Activated CD8-positive, alpha-beta T cell treated with anti-CD3 and anti-CD28 coated beads for 36 hours (primary cell): ENCODE measurements at regions of chr12 and their contacts with region 1.

Region 1: DNA sequence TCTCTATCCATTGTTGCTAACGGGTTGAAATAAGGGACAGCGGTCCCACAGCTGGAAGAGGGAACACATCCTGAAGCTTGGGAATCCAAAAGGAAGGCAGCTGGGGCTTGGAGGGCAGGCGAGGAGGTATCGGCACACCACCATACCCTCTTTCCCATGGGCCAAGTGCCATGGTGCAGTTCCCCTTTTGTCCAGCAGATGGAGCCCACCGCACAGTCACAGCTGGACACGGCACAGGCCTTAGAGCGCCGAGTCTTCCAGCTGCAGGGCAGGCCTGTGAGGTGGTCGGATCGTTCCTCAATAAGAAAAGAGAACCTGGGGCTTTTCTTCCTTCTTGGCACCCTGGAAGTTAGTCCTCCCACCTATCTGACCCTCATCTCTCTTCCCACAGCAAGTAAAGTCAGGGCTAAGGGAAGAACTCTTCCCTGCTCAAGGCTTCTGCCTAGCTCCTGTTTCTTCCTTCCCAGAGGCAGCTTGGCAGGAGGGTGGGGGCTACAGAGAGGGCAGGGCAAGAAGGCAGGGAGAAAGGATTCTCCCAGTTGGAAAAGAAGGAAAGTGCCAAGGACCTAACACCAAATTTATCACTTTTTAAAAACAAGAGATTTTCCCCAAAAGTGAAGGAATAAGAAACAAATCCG is 8.6 kb downstream of the PPP1R1A start:
- DNase-seq: peak; percentile 91
- ATAC-seq: peak; percentile 99
- H3K4me3 Mint-ChIP-seq: no peak overlapping the region
- H3K27ac Mint-ChIP-seq: no peak overlapping the region
- H3K4me1 Mint-ChIP-seq: peaks cover 5% of the 10 kb centered on the region
- H3K27me3 Mint-ChIP-seq: peaks cover 5% of the 10 kb centered on the region
- CTCF ChIP-seq: peak; percentile 98

Region 2: GRCh38 chr12:54526812-54527630 is 52.8 kb before region 1 on chr12:
- CTCF ChIA-PET with region 1: interaction called, 21 read pairs
- POLR2A ChIA-PET with region 1: no interaction called
- intact Hi-C with region 1: no loop called
- DNase-seq: peak; percentile 70
- ATAC-seq: peak; percentile 51
- H3K4me3 Mint-ChIP-seq: no peak overlapping the region
- H3K27ac Mint-ChIP-seq: no peak overlapping the region
- H3K4me1 Mint-ChIP-seq: peaks cover 9% of the 10 kb centered on the region
- H3K27me3 Mint-ChIP-seq: no peaks in the 10 kb centered on the region
- CTCF ChIP-seq: peak; percentile 91

Region 3: GRCh38 chr12:54560374-54560858 is 19.4 kb before region 1 on chr12:
- CTCF ChIA-PET with region 1: interaction called, 44 read pairs
- POLR2A ChIA-PET with region 1: interaction called, 3 read pairs
- intact Hi-C with region 1: no loop called
- DNase-seq: peak; percentile 95
- ATAC-seq: peak; percentile 100
- H3K4me3 Mint-ChIP-seq: peak overlapping the region; percentile 71
- H3K27ac Mint-ChIP-seq: peak overlapping the region; percentile 85
- H3K4me1 Mint-ChIP-seq: peaks cover 22% of the 10 kb centered on the region
- H3K27me3 Mint-ChIP-seq: peaks cover 3% of the 10 kb centered on the region
- CTCF ChIP-seq: no peak

Region 4: GRCh38 chr12:54565310-54565985 is 14.4 kb before region 1 on chr12:
- CTCF ChIA-PET with region 1: interaction called, 44 read pairs
- POLR2A ChIA-PET with region 1: interaction called, 3 read pairs
- intact Hi-C with region 1: no loop called
- DNase-seq: no peak
- ATAC-seq: no peak
- H3K4me3 Mint-ChIP-seq: no peak overlapping the region
- H3K27ac Mint-ChIP-seq: no peak overlapping the region
- H3K4me1 Mint-ChIP-seq: peaks cover 13% of the 10 kb centered on the region
- H3K27me3 Mint-ChIP-seq: no peaks in the 10 kb centered on the region
- CTCF ChIP-seq: no peak

Region 5: DNA sequence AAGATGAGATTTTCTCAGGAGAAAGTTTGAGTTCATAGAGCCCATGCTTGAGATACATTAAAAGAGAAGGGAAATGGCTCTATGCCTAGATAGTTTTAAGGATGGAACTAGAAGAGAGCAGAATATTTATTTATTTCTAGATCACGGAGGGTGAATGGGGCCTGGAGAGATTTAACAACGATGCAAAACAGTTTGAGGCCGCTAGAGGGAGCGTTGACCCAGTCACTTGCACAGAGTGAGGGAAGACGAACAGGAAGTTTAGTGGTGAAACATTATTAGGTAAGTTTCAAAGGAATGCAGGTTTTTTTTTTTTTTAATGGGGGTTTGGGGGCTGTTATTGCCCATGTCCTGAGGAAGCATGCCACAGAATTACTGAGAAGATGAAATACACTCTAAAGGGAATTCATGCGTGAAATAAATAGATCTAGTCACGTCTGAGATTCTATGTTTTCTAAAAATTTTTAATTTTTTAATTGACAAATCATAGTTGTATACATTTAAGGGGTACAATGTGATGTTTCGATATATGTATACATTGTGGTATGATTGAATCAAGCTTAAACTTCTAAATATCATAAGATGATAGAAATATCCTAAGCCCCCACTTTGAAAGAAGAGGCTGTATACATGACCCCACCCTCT is 23.5 kb after region 1 on chr12:
- CTCF ChIA-PET with region 1: interaction called, 120 read pairs
- POLR2A ChIA-PET with region 1: no interaction called
- intact Hi-C with region 1: no loop called
- DNase-seq: peak; percentile 85
- ATAC-seq: peak; percentile 95
- H3K4me3 Mint-ChIP-seq: no peak overlapping the region
- H3K27ac Mint-ChIP-seq: no peak overlapping the region
- H3K4me1 Mint-ChIP-seq: peaks cover 5% of the 10 kb centered on the region
- H3K27me3 Mint-ChIP-seq: peaks cover 2% of the 10 kb centered on the region
- CTCF ChIP-seq: peak; percentile 80